CD8-positive, alpha-beta T cell (primary cell): ENCODE measurements at regions of chr6 and their contacts with region 1.

Region 1: DNA sequence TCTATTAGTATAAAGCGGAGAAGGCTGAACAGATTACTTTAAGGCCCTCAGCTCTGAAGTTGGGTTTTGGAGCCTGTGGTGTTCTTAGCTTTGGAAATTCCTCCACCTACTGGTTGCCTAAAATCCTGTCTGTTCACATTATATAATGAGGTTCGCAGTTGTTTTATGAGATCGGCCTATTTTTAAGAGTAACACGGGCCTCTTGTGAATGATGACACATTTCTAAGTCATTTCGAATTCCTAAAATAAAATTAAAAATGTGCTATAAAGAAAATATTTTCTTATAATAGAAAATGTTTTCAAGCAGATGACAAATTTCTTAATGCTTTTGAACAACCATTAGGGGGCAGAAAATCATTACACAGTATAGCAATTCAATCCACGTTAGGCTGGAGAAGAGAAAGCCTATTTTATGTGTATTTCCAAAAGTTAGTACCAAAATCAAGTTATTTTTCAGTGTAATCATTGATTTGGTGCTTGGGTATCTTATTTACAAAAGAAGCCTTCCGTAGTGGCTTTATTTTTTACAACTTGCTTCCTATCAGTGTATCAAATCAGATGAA is 15.8 kb upstream of the FAM8A1 start:
- DNase-seq: peak in 3 of 9 experiments; percentile 17 to 67 (median 53)
- ATAC-seq: peak; percentile 67
- H3K4me3 ChIP-seq: no peak overlapping the region
- H3K4me3 Mint-ChIP-seq: peak overlapping the region; percentile 17
- H3K27ac ChIP-seq: no peak overlapping the region
- H3K27ac Mint-ChIP-seq: no peak overlapping the region
- H3K4me1 ChIP-seq: peaks cover 5% of the 10 kb centered on the region
- H3K4me1 Mint-ChIP-seq: peaks cover 10% of the 10 kb centered on the region
- H3K27me3 ChIP-seq: peaks cover 0 to 5% of the 10 kb centered on the region in 2 experiments
- H3K27me3 Mint-ChIP-seq: peaks cover 6% of the 10 kb centered on the region
- CTCF ChIP-seq: peak; percentile 89

Region 2: GRCh38 chr6:16228709-16229665 is 1355.3 kb before region 1 on chr6:
- CTCF ChIA-PET with region 1: no interaction called
- POLR2A ChIA-PET with region 1: no interaction called
- intact Hi-C with region 1: loop called in 1 of 2 experiments (anchors 5 kb)
- DNase-seq: no peak
- ATAC-seq: no peak
- H3K4me3 ChIP-seq: no peak overlapping the region
- H3K4me3 Mint-ChIP-seq: no peak overlapping the region
- H3K27ac ChIP-seq: no peak overlapping the region
- H3K27ac Mint-ChIP-seq: no peak overlapping the region
- H3K4me1 ChIP-seq: no peaks in the 10 kb centered on the region
- H3K4me1 Mint-ChIP-seq: no peaks in the 10 kb centered on the region
- H3K27me3 ChIP-seq: no peaks in the 10 kb centered on the region
- H3K27me3 Mint-ChIP-seq: peaks cover 12% of the 10 kb centered on the region
- CTCF ChIP-seq: no peak

Region 3: DNA sequence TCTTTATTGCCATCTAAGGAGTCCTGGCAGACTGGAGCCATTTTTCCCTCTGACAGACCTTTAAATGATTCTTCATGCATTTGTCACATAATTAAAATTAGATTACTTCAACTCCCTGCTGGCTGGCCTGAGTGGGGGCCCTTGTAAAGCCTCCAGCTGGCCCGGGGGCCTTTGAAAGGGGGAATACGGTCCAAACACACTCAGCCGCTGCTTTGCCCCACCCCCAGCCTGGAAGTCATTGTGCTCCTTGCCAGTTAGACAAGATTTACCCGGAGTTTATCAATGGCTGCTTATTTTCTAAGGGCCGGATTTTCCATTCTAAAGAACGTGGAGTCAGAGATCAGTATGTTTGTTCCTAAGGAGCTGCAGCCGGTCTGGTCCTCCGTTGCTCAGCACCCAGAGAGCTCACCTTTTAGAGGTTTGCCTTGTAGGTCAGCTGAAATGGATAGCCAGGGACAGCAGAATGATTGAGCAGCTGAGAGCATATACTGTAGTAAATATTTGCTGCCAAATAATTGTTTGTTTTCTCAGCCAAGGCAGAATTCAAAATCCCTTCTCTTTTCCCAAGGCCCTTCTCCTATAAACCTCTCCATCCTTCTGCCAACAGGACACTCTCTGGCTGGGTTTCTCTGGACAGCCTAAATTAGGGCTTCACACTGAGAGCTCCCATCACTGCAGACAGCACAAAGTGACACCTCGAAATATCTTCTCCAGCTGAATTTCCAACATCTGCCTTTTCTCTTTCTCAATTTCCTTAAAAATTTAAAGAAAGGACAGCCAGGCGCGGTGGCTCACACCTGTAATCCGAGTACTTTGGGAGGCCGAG is 371.6 kb before region 1 on chr6:
- CTCF ChIA-PET with region 1: no interaction called
- POLR2A ChIA-PET with region 1: no interaction called
- intact Hi-C with region 1: no loop called
- DNase-seq: no peak
- ATAC-seq: no peak
- H3K4me3 ChIP-seq: no peak overlapping the region
- H3K4me3 Mint-ChIP-seq: no peak overlapping the region
- H3K27ac ChIP-seq: no peak overlapping the region
- H3K27ac Mint-ChIP-seq: no peak overlapping the region
- H3K4me1 ChIP-seq: no peaks in the 10 kb centered on the region
- H3K4me1 Mint-ChIP-seq: no peaks in the 10 kb centered on the region
- H3K27me3 ChIP-seq: no peaks in the 10 kb centered on the region
- H3K27me3 Mint-ChIP-seq: peaks cover 4% of the 10 kb centered on the region
- CTCF ChIP-seq: no peak

Region 4: DNA sequence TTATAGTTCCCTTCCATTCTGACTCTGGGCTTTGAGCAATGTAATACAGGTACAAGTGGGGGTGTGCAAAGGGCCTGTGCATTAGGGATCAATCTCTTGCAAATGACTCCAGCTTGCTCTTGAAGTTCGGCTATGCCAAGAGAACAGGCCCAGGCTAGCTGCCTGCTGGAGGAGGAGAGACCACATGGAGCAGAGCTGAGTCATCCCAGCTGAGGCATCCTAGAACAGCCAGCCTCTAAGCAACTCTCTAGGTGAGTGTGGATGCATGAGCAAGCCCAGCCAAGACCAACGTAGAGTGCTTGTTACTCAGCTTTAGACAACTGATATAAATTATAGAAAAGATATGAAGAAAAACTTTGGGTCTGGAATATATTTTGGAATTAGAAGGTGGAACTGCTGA is 350.8 kb before region 1 on chr6:
- CTCF ChIA-PET with region 1: no interaction called
- POLR2A ChIA-PET with region 1: no interaction called
- intact Hi-C with region 1: no loop called
- DNase-seq: no peak
- ATAC-seq: no peak
- H3K4me3 ChIP-seq: no peak overlapping the region
- H3K4me3 Mint-ChIP-seq: no peak overlapping the region
- H3K27ac ChIP-seq: no peak overlapping the region
- H3K27ac Mint-ChIP-seq: no peak overlapping the region
- H3K4me1 ChIP-seq: no peaks in the 10 kb centered on the region
- H3K4me1 Mint-ChIP-seq: no peaks in the 10 kb centered on the region
- H3K27me3 ChIP-seq: no peaks in the 10 kb centered on the region
- H3K27me3 Mint-ChIP-seq: peaks cover 10% of the 10 kb centered on the region
- CTCF ChIP-seq: no peak

Region 5: DNA sequence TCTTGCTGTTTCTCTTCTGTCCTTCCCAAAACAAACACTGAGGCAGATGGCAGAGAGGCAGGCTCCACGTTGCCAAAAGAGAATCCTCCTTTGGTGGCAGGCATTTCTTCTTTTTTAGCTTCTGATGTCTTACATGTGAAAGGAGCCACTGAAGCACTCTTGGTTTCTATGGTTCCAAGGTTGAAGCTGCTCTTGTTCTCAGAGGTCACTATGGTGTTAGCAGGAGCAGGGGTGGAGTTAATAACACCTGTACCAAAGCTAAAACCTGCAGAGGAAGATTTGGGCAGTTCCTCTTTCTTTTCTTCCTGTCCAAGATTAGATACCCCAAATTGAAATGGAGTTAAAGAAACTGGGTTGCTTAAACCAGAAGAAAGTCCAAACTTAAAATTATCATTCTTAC is 44.6 kb after region 1 on chr6:
- CTCF ChIA-PET with region 1: interaction called, 5 read pairs
- POLR2A ChIA-PET with region 1: no interaction called
- intact Hi-C with region 1: loop called in 1 of 2 experiments (anchors 10 kb)
- DNase-seq: no peak
- ATAC-seq: no peak
- H3K4me3 ChIP-seq: no peak overlapping the region
- H3K4me3 Mint-ChIP-seq: no peak overlapping the region
- H3K27ac ChIP-seq: peak overlapping the region in 1 of 2 experiments; percentile 2
- H3K27ac Mint-ChIP-seq: peak overlapping the region; percentile 41
- H3K4me1 ChIP-seq: peaks cover 15% of the 10 kb centered on the region
- H3K4me1 Mint-ChIP-seq: peaks cover 42% of the 10 kb centered on the region
- H3K27me3 ChIP-seq: no peaks in the 10 kb centered on the region
- H3K27me3 Mint-ChIP-seq: no peaks in the 10 kb centered on the region
- CTCF ChIP-seq: no peak

Region 6: DNA sequence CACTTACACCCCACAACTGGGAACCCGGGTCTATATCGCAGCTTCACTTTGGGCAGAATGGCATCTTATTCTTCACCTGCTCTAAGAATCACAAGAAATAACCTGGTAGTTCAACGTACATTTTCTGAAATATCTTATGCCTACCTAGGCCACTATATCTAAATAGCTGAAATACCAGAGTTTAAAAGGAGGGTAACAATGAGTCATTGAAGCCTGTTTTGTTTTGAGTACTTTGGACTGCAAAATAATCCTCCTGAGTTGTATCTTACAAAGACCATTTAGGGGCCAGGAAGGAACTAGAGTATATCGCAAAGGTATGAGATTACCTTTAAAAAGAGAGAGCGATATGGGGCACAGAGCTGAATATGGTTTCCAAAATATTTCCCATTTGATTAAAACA is 219.1 kb after region 1 on chr6:
- CTCF ChIA-PET with region 1: interaction called, 43 read pairs
- POLR2A ChIA-PET with region 1: no interaction called
- intact Hi-C with region 1: loop called (anchors 1 kb)
- DNase-seq: no peak
- ATAC-seq: no peak
- H3K4me3 ChIP-seq: no peak overlapping the region
- H3K4me3 Mint-ChIP-seq: no peak overlapping the region
- H3K27ac ChIP-seq: no peak overlapping the region
- H3K27ac Mint-ChIP-seq: no peak overlapping the region
- H3K4me1 ChIP-seq: no peaks in the 10 kb centered on the region
- H3K4me1 Mint-ChIP-seq: peaks cover 3% of the 10 kb centered on the region
- H3K27me3 ChIP-seq: no peaks in the 10 kb centered on the region
- H3K27me3 Mint-ChIP-seq: peaks cover 12% of the 10 kb centered on the region
- CTCF ChIP-seq: no peak

Region 7: DNA sequence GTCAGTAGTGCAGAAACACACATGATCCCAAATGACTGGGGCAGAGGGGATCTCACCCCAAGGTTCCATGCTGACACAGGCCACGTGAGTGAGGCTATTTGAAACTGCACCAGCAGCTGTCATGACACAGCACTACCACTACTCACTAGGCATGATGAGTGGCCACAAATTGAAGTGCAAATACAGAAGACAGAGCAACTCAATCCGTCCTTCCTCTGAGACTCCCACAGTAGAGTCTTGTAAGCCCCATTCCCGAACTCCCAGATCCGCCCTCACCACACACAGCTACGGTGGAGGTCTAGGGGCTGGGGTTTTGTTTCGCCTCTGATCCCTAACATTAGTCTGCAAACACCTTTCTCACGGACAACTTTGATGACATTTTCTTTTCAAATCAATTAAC is 235.7 kb after region 1 on chr6:
- CTCF ChIA-PET with region 1: interaction called, 7 read pairs
- POLR2A ChIA-PET with region 1: no interaction called
- intact Hi-C with region 1: loop called in 1 of 2 experiments (anchors 1 kb)
- DNase-seq: no peak
- ATAC-seq: no peak
- H3K4me3 ChIP-seq: no peak overlapping the region
- H3K4me3 Mint-ChIP-seq: no peak overlapping the region
- H3K27ac ChIP-seq: no peak overlapping the region
- H3K27ac Mint-ChIP-seq: no peak overlapping the region
- H3K4me1 ChIP-seq: no peaks in the 10 kb centered on the region
- H3K4me1 Mint-ChIP-seq: no peaks in the 10 kb centered on the region
- H3K27me3 ChIP-seq: peaks cover 0 to 3% of the 10 kb centered on the region in 2 experiments
- H3K27me3 Mint-ChIP-seq: peaks cover 10% of the 10 kb centered on the region
- CTCF ChIP-seq: no peak

Region 8: DNA sequence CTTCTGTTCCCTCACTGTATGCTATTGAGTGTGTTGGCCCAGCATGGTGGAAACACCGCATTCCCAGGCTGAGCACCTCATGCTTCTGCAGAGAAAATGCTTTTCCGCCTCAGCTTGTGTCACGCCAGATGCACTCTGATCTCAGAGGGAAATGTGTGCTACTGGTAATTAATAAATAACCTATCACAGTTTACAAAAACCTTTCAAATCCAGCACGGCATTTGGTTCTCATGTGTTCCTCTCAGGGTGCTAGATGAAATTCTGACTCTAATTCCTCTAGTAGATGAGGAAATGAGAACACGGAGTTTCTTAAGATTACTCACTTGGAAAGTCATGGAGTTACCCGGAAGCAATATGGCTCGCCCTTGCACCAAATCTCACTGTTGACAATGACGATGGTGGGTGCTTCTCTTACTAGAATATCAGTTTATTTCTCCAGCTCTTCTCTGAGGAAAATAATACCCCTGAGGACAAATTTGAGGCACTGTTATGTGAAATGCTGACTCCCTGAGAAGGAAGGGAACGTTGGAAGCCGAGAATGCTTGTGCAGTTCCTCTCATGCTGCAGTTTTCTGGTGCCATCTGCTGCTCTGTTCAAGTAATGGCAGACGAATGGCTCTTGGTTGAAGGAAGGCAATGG is 919.4 kb after region 1 on chr6:
- CTCF ChIA-PET with region 1: no interaction called
- POLR2A ChIA-PET with region 1: no interaction called
- intact Hi-C with region 1: loop called in 1 of 2 experiments (anchors 5 kb)
- DNase-seq: peak in 6 of 9 experiments; percentile 7 to 62 (median 27)
- ATAC-seq: no peak
- H3K4me3 ChIP-seq: no peak overlapping the region
- H3K4me3 Mint-ChIP-seq: no peak overlapping the region
- H3K27ac ChIP-seq: no peak overlapping the region
- H3K27ac Mint-ChIP-seq: no peak overlapping the region
- H3K4me1 ChIP-seq: no peaks in the 10 kb centered on the region
- H3K4me1 Mint-ChIP-seq: peaks cover 2% of the 10 kb centered on the region
- H3K27me3 ChIP-seq: no peaks in the 10 kb centered on the region
- H3K27me3 Mint-ChIP-seq: no peaks in the 10 kb centered on the region
- CTCF ChIP-seq: peak; percentile 82